Activated CD8-positive, alpha-beta memory T cell treated with anti-CD3 and anti-CD28 coated beads, Interleukin-2, amount 10 ng/mL, durations not matched to agents 7 days and 5 days (primary cell): ENCODE measurements at regions of chr11 and their contacts with region 1.

Region 1: GRCh38 chr11:74449369-74449931 is 17.9 kb downstream of the KCNE3 start:
- DNase-seq: peak; percentile 49
- ATAC-seq: peak; percentile 85
- H3K4me3 Mint-ChIP-seq: no peak overlapping the region
- H3K27ac Mint-ChIP-seq: no peak overlapping the region
- H3K4me1 Mint-ChIP-seq: peaks cover 6% of the 10 kb centered on the region
- H3K27me3 Mint-ChIP-seq: peaks cover 23% of the 10 kb centered on the region

Region 2: DNA sequence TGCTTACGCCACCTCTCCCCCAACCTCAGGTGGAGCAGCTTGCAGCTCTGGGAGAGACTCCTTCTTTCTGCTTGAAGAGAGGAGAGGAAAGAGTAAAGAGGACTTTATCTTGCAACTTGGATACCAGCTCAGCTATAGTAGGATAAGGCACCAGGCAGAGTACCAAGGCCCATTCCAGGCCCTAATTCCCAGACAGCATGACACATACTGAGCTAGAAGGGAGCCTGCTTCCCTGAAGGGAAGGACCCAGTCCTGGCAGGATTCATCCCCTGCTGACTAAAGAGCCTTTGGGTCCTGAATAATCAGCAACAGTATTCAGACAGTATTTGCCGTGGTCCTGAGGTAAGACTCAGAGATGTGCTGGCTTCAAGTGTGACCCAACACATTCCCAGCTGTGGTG is 236.9 kb before region 1 on chr11:
- CTCF ChIA-PET with region 1: no interaction called
- DNase-seq: no peak
- ATAC-seq: no peak
- H3K4me3 Mint-ChIP-seq: no peak overlapping the region
- H3K27ac Mint-ChIP-seq: no peak overlapping the region
- H3K4me1 Mint-ChIP-seq: no peaks in the 10 kb centered on the region
- H3K27me3 Mint-ChIP-seq: no peaks in the 10 kb centered on the region

Region 3: DNA sequence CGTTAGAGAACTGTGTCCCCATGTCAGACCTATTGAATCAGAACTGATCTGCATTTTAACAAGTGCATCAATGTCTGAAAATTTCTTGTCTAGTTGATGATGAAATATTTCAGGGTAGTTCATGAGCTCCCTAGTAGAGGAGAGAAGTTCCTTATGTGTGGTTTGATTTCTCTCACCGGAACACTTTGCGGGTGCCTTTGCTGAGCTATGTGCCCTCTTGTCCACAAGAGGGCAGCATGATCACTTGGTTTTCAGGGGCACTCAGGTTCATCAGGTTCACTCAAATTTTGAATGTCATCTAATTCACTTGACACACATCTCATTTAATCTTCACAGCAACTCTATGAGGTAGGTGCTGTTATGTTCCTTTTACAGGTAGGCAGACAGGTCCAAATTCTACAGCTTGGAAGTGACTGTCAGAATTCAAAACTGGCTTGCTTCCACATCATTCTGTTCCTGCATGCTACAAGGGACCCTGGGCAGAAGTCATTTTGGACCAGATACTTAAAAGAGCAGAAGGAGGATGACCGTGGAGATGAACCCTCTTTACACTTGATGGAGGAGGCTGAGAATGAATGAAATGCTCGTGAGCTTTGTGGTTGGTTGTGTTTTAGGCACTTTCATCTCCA is 193.6 kb before region 1 on chr11:
- CTCF ChIA-PET with region 1: interaction called, 75 read pairs
- DNase-seq: peak; percentile 62
- ATAC-seq: peak; percentile 63
- H3K4me3 Mint-ChIP-seq: no peak overlapping the region
- H3K27ac Mint-ChIP-seq: no peak overlapping the region
- H3K4me1 Mint-ChIP-seq: no peaks in the 10 kb centered on the region
- H3K27me3 Mint-ChIP-seq: no peaks in the 10 kb centered on the region

Region 4: DNA sequence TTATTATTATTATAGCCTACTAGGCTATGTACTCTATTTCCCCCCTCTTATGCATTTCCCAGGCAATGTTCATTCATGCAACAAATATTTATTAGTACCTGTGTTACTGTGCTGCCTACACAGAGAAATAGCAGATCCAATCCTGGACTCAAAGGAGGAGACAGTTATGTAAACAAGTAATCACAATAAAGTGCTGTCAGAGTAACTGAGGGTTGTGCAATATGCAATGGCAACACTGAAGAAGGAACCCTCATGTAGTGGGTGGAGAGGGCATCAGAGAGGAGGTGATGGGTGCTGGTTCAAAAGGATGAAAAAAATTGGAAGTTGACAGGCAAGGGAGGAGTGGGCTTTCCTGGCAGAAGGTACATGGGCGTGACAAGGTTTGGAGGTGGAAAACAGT is 137.1 kb before region 1 on chr11:
- CTCF ChIA-PET with region 1: no interaction called
- DNase-seq: no peak
- ATAC-seq: no peak
- H3K4me3 Mint-ChIP-seq: no peak overlapping the region
- H3K27ac Mint-ChIP-seq: no peak overlapping the region
- H3K4me1 Mint-ChIP-seq: peaks cover 5% of the 10 kb centered on the region
- H3K27me3 Mint-ChIP-seq: peaks cover 63% of the 10 kb centered on the region

Region 5: GRCh38 chr11:74330075-74330858 is 119.2 kb before region 1 on chr11:
- CTCF ChIA-PET with region 1: no interaction called
- DNase-seq: no peak
- ATAC-seq: no peak
- H3K4me3 Mint-ChIP-seq: no peak overlapping the region
- H3K27ac Mint-ChIP-seq: no peak overlapping the region
- H3K4me1 Mint-ChIP-seq: no peaks in the 10 kb centered on the region
- H3K27me3 Mint-ChIP-seq: no peaks in the 10 kb centered on the region

Region 6: GRCh38 chr11:74388678-74389327 is 60.6 kb before region 1 on chr11:
- CTCF ChIA-PET with region 1: interaction called, 60 read pairs
- DNase-seq: peak; percentile 78
- ATAC-seq: peak; percentile 87
- H3K4me3 Mint-ChIP-seq: no peak overlapping the region
- H3K27ac Mint-ChIP-seq: peak overlapping the region; percentile 5
- H3K4me1 Mint-ChIP-seq: peaks cover 26% of the 10 kb centered on the region
- H3K27me3 Mint-ChIP-seq: no peaks in the 10 kb centered on the region

Region 7: DNA sequence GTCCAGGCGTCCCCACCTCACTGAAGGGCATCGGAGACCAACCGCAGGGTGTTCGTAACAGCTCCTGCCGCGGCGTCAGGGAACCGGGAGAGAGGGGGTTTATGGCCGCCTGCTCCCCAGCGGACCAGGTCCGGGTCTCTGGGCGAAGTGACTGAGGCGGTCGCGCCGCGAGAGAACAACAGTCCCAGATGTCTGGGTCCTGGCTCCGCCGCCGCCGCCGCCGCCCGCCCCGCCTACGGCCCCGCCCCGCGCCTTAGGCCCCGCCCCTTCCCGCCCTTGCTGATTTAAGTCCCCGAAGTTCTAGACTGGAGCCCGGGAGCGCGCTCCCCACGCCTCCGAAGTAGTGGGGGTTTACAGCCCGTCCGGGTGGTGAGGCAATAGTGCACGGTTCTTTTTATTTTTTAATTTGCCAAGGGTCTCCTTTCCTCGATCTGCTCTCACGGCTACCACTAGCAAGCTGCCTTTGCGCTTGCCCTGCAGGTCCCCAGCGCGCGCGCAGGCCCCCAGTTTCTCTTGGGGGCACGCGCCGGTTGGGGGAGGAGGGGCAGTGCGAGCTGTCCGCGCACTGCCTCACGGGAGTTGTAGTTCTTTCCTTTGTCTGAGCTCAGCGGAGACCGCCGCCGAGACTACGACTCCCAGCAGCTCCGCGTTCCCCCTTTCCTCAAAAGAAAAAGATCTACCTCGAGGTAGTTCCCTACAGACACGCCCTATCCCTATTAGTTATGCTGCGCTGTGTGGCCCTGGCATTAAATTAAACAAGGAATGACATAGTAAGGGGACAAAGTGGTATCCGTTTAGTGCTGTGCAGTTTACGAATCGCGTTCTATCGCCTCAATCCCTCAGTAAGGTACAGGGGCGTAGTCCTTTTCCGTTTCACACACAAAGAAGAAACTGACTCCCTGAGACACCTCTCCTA is 50.9 kb before region 1 on chr11 and contains the start of gene PGM2L1:
- CTCF ChIA-PET with region 1: interaction called, 12 read pairs
- DNase-seq: peak; percentile 96
- ATAC-seq: peak; percentile 89
- H3K4me3 Mint-ChIP-seq: peak within 1 kb of the TSS; percentile 89
- H3K27ac Mint-ChIP-seq: peak within 1 kb of the TSS; percentile 95
- H3K4me1 Mint-ChIP-seq: peaks cover 27% of the 10 kb centered on the region
- H3K27me3 Mint-ChIP-seq: no peaks in the 10 kb centered on the region
- total RNA-seq, gene PGM2L1: 10.1 to 13.1 TPM

Region 8: GRCh38 chr11:74437441-74438042 is 11.9 kb before region 1 on chr11:
- CTCF ChIA-PET with region 1: interaction called, 10 read pairs
- DNase-seq: no peak
- ATAC-seq: no peak
- H3K4me3 Mint-ChIP-seq: no peak overlapping the region
- H3K27ac Mint-ChIP-seq: no peak overlapping the region
- H3K4me1 Mint-ChIP-seq: no peaks in the 10 kb centered on the region
- H3K27me3 Mint-ChIP-seq: peaks cover 12% of the 10 kb centered on the region

Region 9: DNA sequence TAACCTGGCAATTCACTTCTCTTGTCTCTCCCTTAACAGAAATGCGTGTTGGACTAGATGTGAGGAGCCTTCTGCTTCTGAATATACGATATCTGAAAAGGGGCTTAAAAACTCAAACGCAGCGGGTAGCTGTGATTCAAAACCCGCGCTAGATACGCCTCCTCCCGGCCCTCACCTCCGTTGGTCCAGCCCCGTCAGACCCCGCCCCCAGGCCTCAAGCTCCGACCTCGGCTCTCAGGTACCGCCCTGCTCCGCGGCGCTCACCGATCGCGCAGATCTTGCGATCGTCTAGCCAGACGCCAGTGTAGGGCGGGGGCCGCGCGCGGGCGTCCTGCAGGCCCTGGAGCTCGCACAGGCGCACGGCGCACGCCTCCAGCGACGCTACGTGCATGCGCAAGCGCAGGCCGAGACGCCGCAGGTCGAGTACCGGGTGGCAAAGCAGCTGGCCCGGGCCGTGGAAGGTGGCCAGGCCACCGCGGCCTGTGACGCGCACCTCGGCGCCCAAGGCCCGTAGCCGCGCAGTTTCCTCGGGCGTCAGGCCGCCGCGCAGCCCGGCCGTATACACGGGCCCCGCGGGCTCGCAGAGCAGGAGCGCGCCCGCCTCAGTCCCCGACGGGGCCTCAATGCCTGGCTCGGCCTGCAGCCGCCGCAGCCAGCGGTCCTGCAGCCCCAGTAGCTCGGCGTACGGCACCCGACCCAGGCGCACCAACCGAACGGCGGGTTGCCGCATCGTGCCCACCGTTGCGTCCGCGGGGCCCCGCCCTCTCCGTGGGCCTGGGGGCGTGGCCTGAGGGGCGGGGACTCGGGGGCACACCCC is 43.7 kb after region 1 on chr11 and contains the start of gene LIPT2:
- CTCF ChIA-PET with region 1: interaction called, 10 read pairs
- DNase-seq: peak; percentile 98
- ATAC-seq: peak; percentile 99
- H3K4me3 Mint-ChIP-seq: peak within 1 kb of the TSS; percentile 75
- H3K27ac Mint-ChIP-seq: peak within 1 kb of the TSS; percentile 85
- H3K4me1 Mint-ChIP-seq: peaks cover 17% of the 10 kb centered on the region
- H3K27me3 Mint-ChIP-seq: no peaks in the 10 kb centered on the region
- total RNA-seq, gene LIPT2: 0.82 to 2.5 TPM

Region 10: DNA sequence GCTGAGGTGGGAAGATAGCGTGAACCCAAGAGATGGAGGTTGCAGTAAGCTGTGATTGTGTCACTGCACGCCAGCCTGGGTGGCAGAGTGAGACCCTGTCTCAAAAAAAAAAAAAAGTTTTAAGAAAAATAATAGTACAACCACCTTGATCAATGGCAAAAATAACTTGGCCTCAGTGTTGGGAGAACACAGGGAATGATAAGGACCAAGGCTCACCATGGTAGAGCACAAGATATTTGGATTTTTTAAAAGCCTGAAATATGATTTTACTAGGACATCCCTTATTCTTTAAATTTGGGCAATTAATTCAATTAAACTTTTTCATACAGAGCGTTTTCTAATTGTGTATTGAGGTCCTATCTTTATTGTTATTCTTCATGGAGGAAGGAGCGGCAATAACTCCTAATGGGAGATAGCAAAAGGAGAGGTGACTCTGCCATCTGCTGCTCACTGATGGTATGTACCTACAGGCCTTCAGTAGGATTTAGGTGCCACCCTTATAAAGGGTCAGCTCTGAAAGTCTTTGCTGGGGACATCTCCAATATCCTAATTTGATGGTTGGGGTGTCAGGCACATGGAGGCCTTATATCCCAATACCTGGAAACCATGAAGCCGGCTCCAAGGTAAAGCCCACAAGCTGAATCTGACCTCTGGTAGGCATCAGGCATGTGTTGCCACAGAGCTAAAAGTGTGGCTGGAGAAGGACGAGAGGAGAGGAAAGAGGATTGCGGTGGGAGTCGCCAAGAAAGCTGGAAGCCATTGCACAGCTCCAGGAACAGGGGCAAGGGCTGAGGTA is 121.0 kb after region 1 on chr11:
- CTCF ChIA-PET with region 1: interaction called, 46 read pairs
- DNase-seq: no peak
- ATAC-seq: no peak
- H3K4me3 Mint-ChIP-seq: no peak overlapping the region
- H3K27ac Mint-ChIP-seq: no peak overlapping the region
- H3K4me1 Mint-ChIP-seq: no peaks in the 10 kb centered on the region
- H3K27me3 Mint-ChIP-seq: peaks cover 16% of the 10 kb centered on the region